ENCODE measurements at regions of chr1 and their contacts with region 1.

Region 1: GRCh38 chr1:181142096-181142958 is 53.8 kb downstream of the IER5 start:
- DNase-seq: peak; percentile 93
- H3K4me3 Mint-ChIP-seq: peak overlapping the region; percentile 24
- H3K27ac Mint-ChIP-seq: peak overlapping the region; percentile 67
- H3K4me1 Mint-ChIP-seq: peaks cover 46% of the 10 kb centered on the region
- H3K27me3 Mint-ChIP-seq: peaks cover 3% of the 10 kb centered on the region

Region 2: DNA sequence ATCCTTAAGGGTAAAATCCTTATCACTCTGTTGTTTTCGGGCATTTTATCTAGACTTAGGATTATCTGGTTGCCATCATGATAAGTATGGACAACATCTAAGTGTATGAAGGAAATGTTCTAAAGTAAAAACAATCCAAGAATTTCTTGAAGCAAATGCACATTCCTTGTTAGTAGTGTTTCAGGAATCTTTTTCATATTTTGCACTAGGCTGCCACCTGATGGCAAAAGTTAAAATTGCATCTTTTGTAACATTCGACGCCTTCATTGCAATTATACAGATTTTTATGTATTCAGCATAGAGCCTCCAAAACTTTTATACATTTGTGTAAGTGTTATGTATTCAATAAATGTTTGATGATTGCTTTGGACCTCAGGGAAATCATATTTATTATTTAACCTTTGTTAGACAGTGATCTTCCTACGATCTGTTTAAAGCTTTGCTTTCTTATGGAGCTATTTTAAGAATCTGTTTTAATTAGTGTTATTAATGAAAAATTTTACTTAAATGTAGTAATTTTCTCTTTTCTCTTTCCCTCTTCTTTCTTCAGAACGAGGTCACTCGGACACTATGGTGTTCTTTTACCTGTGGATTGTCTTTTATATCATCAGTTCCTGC is 279.1 kb before region 1 on chr1:
- CTCF ChIA-PET with region 1: interaction called, 16 read pairs
- POLR2A ChIA-PET with region 1: no interaction called
- intact Hi-C with region 1: no loop called
- DNase-seq: no peak
- H3K4me3 Mint-ChIP-seq: no peak overlapping the region
- H3K27ac Mint-ChIP-seq: no peak overlapping the region
- H3K4me1 Mint-ChIP-seq: no peaks in the 10 kb centered on the region
- H3K27me3 Mint-ChIP-seq: no peaks in the 10 kb centered on the region

Region 3: GRCh38 chr1:181028196-181028595 is 114.1 kb before region 1 on chr1:
- CTCF ChIA-PET with region 1: interaction called, 200 read pairs
- POLR2A ChIA-PET with region 1: interaction called, 4 read pairs
- intact Hi-C with region 1: no loop called
- DNase-seq: no peak
- H3K4me3 Mint-ChIP-seq: no peak overlapping the region
- H3K27ac Mint-ChIP-seq: no peak overlapping the region
- H3K4me1 Mint-ChIP-seq: peaks cover 9% of the 10 kb centered on the region
- H3K27me3 Mint-ChIP-seq: no peaks in the 10 kb centered on the region

Region 4: DNA sequence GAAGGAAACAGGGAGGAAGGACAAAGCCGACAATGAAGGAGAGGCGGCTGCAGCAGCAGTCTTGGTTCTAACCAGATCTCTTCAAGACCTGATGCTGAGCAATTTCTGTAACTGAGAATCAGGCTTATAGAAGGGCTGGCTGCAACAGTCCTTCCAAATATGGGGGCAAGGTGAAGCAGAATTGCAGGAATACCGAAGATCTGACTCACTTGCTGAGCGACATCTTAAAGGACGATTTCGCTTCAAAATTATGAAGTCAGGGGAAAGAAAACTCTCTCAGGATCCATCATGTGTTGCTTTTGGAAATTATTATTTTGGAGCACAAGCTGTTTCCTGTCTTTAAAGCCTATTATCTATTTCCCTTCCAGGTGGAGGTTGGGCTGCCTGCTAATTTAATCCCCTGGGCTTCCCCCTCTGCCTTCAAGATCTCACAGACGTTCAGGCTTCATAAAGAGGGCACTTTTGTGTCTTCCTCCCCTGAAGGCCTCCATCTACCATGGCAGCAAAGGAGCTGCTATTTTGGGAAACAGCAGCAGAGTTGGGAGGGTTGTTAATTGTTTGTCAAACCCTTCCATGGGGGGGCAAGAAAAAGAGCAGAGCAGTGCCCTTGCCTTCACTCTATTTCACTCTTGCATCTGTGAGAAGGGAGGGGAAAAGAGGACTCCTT is 64.6 kb before region 1 on chr1:
- CTCF ChIA-PET with region 1: interaction called, 52 read pairs
- POLR2A ChIA-PET with region 1: no interaction called
- intact Hi-C with region 1: no loop called
- DNase-seq: no peak
- H3K4me3 Mint-ChIP-seq: no peak overlapping the region
- H3K27ac Mint-ChIP-seq: no peak overlapping the region
- H3K4me1 Mint-ChIP-seq: peaks cover 18% of the 10 kb centered on the region
- H3K27me3 Mint-ChIP-seq: peaks cover 19% of the 10 kb centered on the region

Region 5: GRCh38 chr1:181105134-181106021 is 36.9 kb before region 1 on chr1:
- CTCF ChIA-PET with region 1: interaction called, 229 read pairs
- POLR2A ChIA-PET with region 1: interaction called, 23 read pairs
- intact Hi-C with region 1: loop called (anchors 1 kb)
- DNase-seq: peak; percentile 93
- H3K4me3 Mint-ChIP-seq: peak overlapping the region; percentile 72
- H3K27ac Mint-ChIP-seq: peak overlapping the region; percentile 1
- H3K4me1 Mint-ChIP-seq: peaks cover 51% of the 10 kb centered on the region
- H3K27me3 Mint-ChIP-seq: peaks cover 19% of the 10 kb centered on the region

Region 6: DNA sequence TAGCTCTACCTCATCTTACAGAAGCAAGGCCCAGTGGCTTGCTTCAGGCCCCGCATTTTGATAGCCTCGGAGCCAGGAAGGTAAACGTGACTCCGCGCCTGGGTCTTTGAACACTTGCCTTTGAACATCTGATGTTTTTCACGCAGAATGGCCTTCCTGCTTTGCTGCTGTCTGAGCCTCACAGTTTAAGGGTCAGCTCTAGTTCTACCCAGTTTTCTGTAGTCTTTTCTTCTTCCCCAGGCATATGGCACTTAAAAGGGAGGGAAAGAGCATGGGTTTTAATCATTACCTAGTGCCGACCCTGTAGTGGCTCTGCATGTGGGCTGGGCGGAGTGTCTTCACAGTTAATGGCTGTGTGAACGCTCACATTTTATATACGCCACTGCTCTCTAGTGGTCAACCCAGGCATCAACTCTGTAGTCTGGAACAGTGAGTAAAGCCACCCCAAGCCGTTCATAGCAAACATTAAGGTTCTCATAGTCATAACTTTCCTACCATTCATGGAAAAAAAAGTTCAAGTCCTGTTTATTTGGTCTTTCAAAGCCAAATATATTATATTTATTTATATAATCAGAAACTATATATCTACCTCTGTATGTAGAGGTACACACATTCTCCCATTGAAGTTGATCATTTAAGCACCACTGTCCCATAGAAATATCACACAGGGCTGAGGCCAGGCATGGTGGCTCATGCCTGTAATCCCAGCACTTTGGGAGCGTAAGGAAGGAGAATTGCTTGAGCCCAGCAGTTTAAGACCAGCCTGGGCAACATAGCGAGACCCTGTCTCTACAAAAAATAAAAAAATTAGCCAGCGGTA is 24.3 kb after region 1 on chr1:
- CTCF ChIA-PET with region 1: interaction called, 48 read pairs
- POLR2A ChIA-PET with region 1: no interaction called
- intact Hi-C with region 1: loop called (anchors 1 kb)
- DNase-seq: peak; percentile 80
- H3K4me3 Mint-ChIP-seq: no peak overlapping the region
- H3K27ac Mint-ChIP-seq: no peak overlapping the region
- H3K4me1 Mint-ChIP-seq: peaks cover 3% of the 10 kb centered on the region
- H3K27me3 Mint-ChIP-seq: no peaks in the 10 kb centered on the region

Measured in activated CD4-positive, alpha-beta memory T cell treated with anti-CD3 and anti-CD28 coated beads for 36 hours (primary cell).